ENCODE measurements at regions of chrX and their contacts with region 1.

Region 1: DNA sequence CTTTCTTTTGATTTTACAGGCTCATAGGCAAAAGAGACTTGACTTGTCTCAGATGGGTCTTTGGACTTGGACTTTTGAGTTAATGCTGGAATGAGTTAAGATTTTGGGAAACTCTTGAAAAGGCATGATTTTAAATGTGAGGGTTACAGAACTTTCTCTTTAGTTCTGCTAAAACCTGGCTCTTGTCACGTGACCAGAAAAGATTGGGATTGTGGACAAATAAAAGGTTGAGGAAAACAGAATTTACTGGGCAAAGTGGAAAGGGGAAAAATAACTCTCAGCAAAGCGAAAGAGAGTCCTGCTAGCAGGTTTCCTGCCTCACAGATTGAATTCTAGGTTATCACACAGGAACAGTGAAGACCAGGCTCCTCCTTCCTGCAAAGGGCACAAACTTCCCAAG is 114.0 kb downstream of the SPANXN4 start:
- DNase-seq: no peak
- H3K4me3 ChIP-seq: no peak overlapping the region
- H3K27ac ChIP-seq: no peak overlapping the region
- H3K4me1 ChIP-seq: no peaks in the 10 kb centered on the region
- H3K27me3 ChIP-seq: no peaks in the 10 kb centered on the region
- CTCF ChIP-seq: no peak

Region 2: DNA sequence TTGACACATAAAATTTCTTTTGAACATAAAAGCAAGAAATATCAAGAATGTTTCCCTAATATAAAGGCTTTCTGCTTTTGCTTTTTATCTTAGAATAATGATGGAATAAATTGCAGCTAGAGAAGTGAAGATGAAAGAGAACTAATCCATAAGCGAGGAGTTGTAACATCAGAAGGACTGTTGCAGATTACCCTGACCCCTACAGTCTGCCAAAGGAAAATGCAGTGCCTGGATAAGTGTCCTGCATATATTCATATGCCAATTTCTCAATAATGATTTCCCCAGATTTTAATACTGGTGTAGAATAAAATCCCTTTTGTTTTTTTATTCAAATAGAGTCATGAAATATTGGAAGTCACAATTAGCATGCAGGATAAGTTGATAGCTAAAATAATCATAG is 1050.5 kb before region 1 on chrX:
- intact Hi-C with region 1: loop called (anchors 5 kb)
- DNase-seq: no peak
- H3K4me3 ChIP-seq: no peak overlapping the region
- H3K27ac ChIP-seq: no peak overlapping the region
- H3K4me1 ChIP-seq: peaks cover 0 to 6% (median 0%) of the 10 kb centered on the region in 4 donors
- H3K27me3 ChIP-seq: no peaks in the 10 kb centered on the region
- CTCF ChIP-seq: peak; percentile 47 to 54

Region 3: GRCh38 chrX:142601792-142602191 is 537.9 kb before region 1 on chrX:
- intact Hi-C with region 1: no loop called
- DNase-seq: no peak
- H3K4me3 ChIP-seq: no peak overlapping the region
- H3K27ac ChIP-seq: no peak overlapping the region
- H3K4me1 ChIP-seq: no peaks in the 10 kb centered on the region
- H3K27me3 ChIP-seq: no peaks in the 10 kb centered on the region
- CTCF ChIP-seq: no peak

Region 4: DNA sequence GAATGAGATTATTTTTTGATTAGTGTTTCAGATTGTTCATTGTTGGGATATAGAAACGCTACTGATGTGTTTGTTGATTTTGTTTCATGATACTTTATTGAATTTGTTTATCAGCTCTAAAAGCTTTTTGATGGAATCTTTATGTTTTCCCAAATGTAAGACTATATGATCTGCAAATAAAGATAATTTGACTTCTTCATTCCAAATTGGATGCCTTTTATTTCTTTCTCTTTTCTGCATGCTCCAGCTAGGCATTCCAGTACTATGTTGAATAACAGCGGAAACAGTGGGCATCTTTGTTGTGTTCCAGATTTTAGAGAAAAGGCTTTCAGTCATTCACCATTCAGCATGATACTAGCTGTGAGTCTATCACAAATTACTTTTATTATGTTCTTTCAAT is 92.2 kb before region 1 on chrX:
- intact Hi-C with region 1: no loop called
- DNase-seq: no peak
- H3K4me3 ChIP-seq: no peak overlapping the region
- H3K27ac ChIP-seq: no peak overlapping the region
- H3K4me1 ChIP-seq: no peaks in the 10 kb centered on the region
- H3K27me3 ChIP-seq: no peaks in the 10 kb centered on the region
- CTCF ChIP-seq: no peak